ENCODE measurements at regions of chr15 and their contacts with region 1.

Region 1: GRCh38 chr15:96356494-96357455 is 26.3 kb downstream of the NR2F2 start:
- DNase-seq: peak; percentile 81 to 92 (median 90)
- H3K4me3 ChIP-seq: peak overlapping the region in 3 of 4 donors; percentile 28 to 84 (median 59)
- H3K27ac ChIP-seq: peak overlapping the region in 4 of 5 donors; percentile 80 to 91 (median 86)
- H3K4me1 ChIP-seq: peaks cover 19 to 41% of the 10 kb centered on the region in 2 donors
- H3K27me3 ChIP-seq: no peaks in the 10 kb centered on the region
- CTCF ChIP-seq: peak; percentile 94 to 99 (median 98)
- POLR2A ChIP-seq: peak; percentile 34 to 48

Region 2: DNA sequence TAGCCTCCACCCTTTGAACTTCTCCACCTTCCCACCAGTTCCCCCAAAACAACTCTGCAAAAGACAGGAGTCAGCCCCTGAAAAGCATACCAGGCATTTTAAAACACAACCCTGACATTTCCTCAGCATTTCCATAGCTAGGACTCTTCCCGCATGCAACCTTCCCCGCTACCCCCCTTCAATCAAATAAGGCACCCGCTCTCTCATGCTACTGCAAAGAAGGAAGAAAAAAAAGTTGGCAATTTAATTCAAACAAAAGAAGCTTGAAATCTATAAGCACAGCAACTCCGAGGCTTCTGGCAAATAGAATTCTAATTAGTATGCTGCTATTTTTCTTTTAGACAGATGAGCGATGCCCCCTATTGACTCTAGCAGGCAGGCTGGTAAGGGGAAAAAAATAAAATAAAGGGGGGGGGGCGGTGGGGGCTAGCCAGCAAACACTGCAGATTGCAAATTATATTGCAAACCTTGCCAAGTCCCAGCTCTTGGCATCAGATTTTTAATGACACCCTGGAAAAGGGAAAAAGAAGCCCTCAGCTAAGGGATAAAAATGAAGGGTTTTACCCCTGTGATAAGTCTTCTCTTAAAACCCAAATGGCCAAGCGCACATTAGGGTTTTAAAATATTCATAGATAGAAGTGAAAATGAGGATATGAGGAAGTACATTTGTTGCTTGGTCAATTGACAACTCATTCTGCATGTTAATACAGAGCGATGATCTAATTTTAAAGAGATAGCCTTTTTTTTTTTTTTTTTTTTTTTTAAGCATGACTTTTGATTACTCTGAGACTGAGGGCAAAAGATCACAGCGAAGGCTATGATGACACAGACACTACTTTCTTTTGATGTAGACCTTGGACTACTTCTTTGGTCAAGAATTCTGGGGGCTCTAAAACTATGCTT is 229.0 kb after region 1 on chr15:
- intact Hi-C with region 1: loop called in 1 of 2 experiments (anchors 10 kb)
- DNase-seq: peak in 1 of 7 donors; percentile 9
- H3K4me3 ChIP-seq: no peak overlapping the region
- H3K27ac ChIP-seq: no peak overlapping the region
- H3K4me1 ChIP-seq: no peaks in the 10 kb centered on the region
- H3K27me3 ChIP-seq: no peaks in the 10 kb centered on the region
- CTCF ChIP-seq: peak in 5 of 6 experiments; percentile 14 to 32 (median 17)
- POLR2A ChIP-seq: no peak

Region 3: DNA sequence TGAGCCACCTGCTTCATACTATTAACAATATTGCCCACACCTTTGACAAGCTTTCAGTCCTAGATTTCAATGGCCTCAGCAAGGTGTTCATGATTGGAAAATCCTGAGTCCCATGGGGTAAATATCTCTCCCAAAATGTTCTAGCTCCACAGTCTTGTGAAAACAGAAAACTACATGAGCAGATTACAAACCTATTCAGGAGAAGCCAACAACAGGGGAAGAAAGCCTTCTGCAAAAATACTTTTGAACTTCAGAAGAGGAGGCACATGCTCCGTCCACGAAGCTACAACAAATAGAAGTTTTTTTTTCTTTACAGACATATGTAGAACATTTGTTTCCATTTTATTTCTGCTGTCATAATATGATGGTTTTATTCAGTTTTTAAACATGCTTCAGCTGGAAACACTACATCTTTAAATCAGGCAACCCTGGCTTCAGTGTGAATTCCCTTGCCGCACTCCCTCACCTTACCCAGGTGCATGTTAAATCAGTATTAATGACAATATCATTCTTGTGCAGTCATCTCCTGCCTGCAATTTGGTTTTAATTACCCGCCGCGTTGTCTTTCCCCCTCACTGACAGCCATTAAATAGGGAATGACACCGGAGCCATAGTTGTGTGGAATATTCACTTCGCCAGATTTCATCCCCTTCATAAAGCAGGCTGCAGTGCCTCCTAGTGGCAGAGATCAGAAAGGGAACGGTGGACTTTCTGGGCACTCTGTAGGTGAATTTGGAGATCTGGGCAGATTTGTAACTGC is 878.3 kb after region 1 on chr15:
- intact Hi-C with region 1: loop called in 1 of 2 experiments (anchors 10 kb)
- DNase-seq: peak; percentile 46 to 80 (median 58)
- H3K4me3 ChIP-seq: peak overlapping the region in 1 of 4 donors; percentile 27
- H3K27ac ChIP-seq: no peak overlapping the region
- H3K4me1 ChIP-seq: no peaks in the 10 kb centered on the region
- H3K27me3 ChIP-seq: no peaks in the 10 kb centered on the region
- CTCF ChIP-seq: peak; percentile 73 to 94 (median 88)
- POLR2A ChIP-seq: no peak